ENCODE measurements at regions of chr12 and their contacts with region 1.

Region 1: GRCh38 chr12:122471324-122472226 is 29.2 kb downstream of the ZCCHC8 start:
- DNase-seq: no peak
- H3K4me3 ChIP-seq: no peak overlapping the region
- H3K27ac ChIP-seq: peak overlapping the region; percentile 56 to 63 (median 59)
- H3K4me1 ChIP-seq: peaks cover 0 to 10% (median 2%) of the 10 kb centered on the region in 4 donors
- H3K27me3 ChIP-seq: no peaks in the 10 kb centered on the region
- CTCF ChIP-seq: peak; percentile 75 to 91 (median 82)
- EP300 ChIP-seq: no peak
- POLR2A ChIP-seq: no peak

Region 2: GRCh38 chr12:122336015-122336946 is 135.3 kb before region 1 on chr12:
- in situ Hi-C with region 1: no loop called
- intact Hi-C with region 1: loop called (anchors 10 kb)
- DNase-seq: peak; percentile 22
- H3K4me3 ChIP-seq: no peak overlapping the region
- H3K27ac ChIP-seq: no peak overlapping the region
- H3K4me1 ChIP-seq: no peaks in the 10 kb centered on the region
- H3K27me3 ChIP-seq: no peaks in the 10 kb centered on the region
- CTCF ChIP-seq: peak; percentile 59 to 71 (median 62)
- EP300 ChIP-seq: no peak
- POLR2A ChIP-seq: no peak

Region 3: DNA sequence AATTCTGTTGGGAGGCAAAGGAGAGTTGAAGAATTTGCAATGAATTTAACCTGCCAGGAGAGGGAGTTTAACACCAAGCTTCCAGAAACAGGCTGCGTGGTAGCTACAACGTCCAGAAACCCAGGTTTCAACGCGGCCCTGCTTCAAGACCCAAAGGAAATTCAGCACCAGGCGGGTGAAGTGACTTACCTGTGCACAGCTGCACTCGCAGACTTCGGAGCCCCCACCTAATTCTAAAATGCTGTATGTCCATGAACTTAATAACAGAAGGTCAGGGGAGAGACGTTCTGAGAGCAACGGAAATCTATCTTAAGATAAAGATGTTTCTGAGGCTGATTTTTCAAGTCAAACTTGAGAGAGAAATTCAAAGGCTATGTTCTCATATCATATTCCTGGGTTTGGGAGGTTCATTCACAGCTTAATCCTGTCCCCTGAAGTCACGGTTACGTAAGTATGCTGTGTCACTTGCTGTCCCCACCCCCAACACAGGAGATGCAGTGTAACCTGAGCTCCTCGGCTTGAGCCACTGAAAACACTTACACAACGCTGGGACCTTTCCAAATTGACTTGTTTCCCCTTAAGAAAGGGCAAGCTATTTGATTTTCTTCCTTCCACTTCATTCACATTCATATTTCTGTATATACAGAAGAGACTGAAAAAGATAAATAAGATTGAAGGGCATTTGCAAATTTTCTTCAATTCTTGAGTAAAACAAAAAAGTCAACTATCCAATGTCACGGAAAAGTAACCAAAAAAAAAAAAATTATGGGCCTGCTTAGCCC is 71.8 kb before region 1 on chr12:
- in situ Hi-C with region 1: loop called in 2 of 4 experiments (anchors 10 kb)
- intact Hi-C with region 1: loop called (anchors 10 kb)
- DNase-seq: peak; percentile 55
- H3K4me3 ChIP-seq: no peak overlapping the region
- H3K27ac ChIP-seq: peak overlapping the region; percentile 87 to 92 (median 88)
- H3K4me1 ChIP-seq: peaks cover 8 to 25% (median 18%) of the 10 kb centered on the region in 4 donors
- H3K27me3 ChIP-seq: no peaks in the 10 kb centered on the region
- CTCF ChIP-seq: peak; percentile 55 to 76 (median 65)
- EP300 ChIP-seq: no peak
- POLR2A ChIP-seq: no peak

Region 4: GRCh38 chr12:122427412-122427811 is 44.2 kb before region 1 on chr12:
- in situ Hi-C with region 1: no loop called
- intact Hi-C with region 1: no loop called
- DNase-seq: no peak
- H3K4me3 ChIP-seq: no peak overlapping the region
- H3K27ac ChIP-seq: no peak overlapping the region
- H3K4me1 ChIP-seq: peaks cover 6 to 14% (median 11%) of the 10 kb centered on the region in 4 donors
- H3K27me3 ChIP-seq: no peaks in the 10 kb centered on the region
- CTCF ChIP-seq: no peak
- EP300 ChIP-seq: no peak
- POLR2A ChIP-seq: no peak

Measured in transverse colon (tissue), 4 donors.